ENCODE measurements at regions of chr9 and their contacts with region 1.

Region 1: DNA sequence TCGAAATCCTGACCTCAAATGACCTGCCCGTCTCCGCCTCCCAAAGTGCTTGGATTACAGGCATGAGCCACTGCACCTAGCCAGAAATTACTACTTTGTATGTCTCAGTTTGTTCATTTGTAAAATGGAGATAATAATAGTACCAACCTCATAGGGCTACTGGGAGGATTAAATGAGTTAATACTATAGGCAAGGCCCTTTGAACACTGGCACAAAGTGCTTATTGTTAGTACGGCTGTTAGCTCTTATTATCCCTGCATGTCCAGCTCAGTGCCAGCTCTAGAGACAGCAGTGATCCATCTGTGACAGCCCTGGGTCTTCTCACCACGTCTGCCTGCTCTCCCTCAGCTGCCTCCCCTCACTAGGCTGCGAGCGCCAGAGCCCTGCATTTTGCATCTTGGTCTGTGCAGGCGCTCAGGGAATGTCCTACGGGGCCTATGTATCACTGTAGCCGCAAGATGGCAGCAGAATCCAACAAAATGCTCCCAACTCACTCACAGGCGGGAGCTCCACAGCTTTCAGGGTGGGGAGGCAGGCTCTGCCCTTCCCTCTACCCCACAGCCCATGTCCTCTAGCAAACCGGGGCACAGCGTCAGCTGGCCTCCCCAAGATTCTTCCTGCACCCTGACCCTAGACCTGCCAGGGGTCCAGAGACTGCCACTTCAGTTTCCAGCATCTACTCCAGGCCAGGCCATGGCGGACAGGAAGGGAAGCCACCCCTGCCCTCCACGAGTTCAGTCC is 17.7 kb upstream of the AKNA start:
- DNase-seq: peak; percentile 78 to 90
- ATAC-seq: peak; percentile 87 to 98
- H3K4me3 ChIP-seq: no peak overlapping the region
- H3K27ac ChIP-seq: no peak overlapping the region
- H3K4me1 ChIP-seq: no peaks in the 10 kb centered on the region
- CTCF ChIP-seq: peak; percentile 84
- EP300 ChIP-seq: no peak
- POLR2A ChIP-seq: no peak
- RAD21 ChIP-seq: peak; percentile 93 to 95

Region 2: GRCh38 chr9:114351932-114352331 is 53.5 kb before region 1 on chr9:
- CTCF ChIA-PET with region 1: no interaction called
- POLR2A ChIA-PET with region 1: no interaction called
- DNase-seq: no peak
- ATAC-seq: no peak
- H3K4me3 ChIP-seq: no peak overlapping the region
- H3K27ac ChIP-seq: peak overlapping the region in 1 of 2 experiments; percentile 85; a peak in 1 of 6 replicates
- H3K4me1 ChIP-seq: peaks cover 28% of the 10 kb centered on the region
- CTCF ChIP-seq: no peak
- EP300 ChIP-seq: no peak
- POLR2A ChIP-seq: no peak
- RAD21 ChIP-seq: no peak

Region 3: DNA sequence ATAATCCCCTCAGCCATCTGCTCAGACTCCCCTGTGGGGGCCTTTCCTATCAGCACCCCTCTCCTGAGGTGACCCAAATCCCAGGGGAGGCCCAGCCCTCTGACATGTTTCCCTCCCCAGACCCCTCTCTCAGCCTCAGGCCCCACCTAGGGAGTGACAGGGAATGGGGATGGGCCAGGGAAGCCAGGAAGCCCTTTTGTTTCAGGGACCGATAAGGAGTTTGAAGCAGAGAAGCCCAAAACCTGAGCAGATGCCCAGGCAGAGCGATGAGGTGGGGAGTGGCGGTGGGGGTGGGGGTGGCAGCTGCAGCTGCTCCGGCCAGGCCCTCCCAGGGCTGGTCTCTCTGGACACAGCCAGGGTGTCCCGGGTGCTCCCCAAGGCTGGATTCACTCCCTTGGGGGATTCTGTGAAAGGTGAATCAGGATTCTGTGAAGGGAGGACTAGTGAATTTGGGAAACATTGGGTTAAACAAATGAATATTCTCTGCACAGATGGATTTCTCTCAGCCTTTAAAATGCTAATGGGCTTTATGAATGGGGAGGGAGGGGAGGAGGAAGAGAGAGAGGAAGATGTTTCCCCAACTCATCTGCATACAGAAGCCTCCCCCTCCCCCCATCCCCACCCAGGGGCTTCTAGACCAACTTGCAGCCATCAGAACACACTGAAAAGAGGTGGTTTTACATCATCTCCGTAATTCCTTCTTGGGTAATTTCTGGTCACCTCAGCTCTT is 35.0 kb before region 1 on chr9:
- CTCF ChIA-PET with region 1: interaction called, 12 read pairs
- POLR2A ChIA-PET with region 1: no interaction called
- DNase-seq: no peak
- ATAC-seq: no peak
- H3K4me3 ChIP-seq: no peak overlapping the region
- H3K27ac ChIP-seq: no peak overlapping the region
- H3K4me1 ChIP-seq: peaks cover 17% of the 10 kb centered on the region
- CTCF ChIP-seq: no peak
- EP300 ChIP-seq: no peak
- POLR2A ChIP-seq: no peak
- RAD21 ChIP-seq: no peak

Region 4: DNA sequence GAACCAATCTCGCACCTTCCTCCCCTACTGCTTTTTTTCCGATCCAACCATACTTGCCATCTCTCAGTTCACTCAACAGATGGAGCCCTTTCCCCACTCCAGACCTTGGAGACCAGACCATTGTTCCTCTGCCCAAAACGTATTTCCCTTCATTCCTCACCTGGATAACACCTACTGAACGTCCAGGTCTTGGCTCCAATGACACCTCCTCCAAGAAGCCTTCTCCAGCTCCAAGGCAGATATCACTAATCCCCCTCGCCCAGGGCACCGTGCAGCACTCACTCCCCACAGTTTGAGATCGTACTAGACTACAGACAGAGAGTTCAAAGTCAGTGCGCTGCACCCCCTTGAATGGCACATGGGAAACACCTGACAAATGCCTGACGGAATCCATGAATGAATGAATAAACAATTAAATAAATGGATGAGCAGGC is 29.4 kb after region 1 on chr9:
- CTCF ChIA-PET with region 1: interaction called, 27 read pairs
- POLR2A ChIA-PET with region 1: no interaction called
- DNase-seq: peak; percentile 47 to 63
- ATAC-seq: peak; percentile 77 to 91; a peak in 5 of 6 replicates
- H3K4me3 ChIP-seq: no peak overlapping the region
- H3K27ac ChIP-seq: no peak overlapping the region
- H3K4me1 ChIP-seq: no peaks in the 10 kb centered on the region
- CTCF ChIP-seq: peak; percentile 66
- EP300 ChIP-seq: no peak
- POLR2A ChIP-seq: no peak
- RAD21 ChIP-seq: peak; percentile 78 to 87

Region 5: DNA sequence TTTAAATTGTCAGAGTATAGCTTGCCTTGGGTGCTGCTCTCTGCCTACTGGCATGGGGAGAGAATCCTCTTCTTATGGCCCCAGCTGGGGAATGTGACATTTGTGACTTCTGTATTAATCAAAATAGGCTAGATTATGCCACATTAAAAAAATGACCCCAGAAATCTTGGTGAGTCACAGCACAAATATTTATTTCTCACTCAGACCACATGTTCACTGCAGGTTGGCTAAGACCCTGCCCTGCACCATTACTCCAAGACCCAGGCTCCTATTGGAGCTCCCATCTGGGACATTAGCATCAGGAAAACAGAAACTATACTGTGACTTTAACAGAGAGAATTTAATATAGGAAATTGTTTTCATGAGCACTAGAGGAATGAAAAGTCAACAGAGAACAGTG is 116.4 kb after region 1 on chr9:
- CTCF ChIA-PET with region 1: no interaction called
- POLR2A ChIA-PET with region 1: no interaction called
- DNase-seq: no peak
- ATAC-seq: no peak
- H3K4me3 ChIP-seq: no peak overlapping the region
- H3K27ac ChIP-seq: no peak overlapping the region
- H3K4me1 ChIP-seq: peaks cover 16% of the 10 kb centered on the region
- CTCF ChIP-seq: no peak
- EP300 ChIP-seq: no peak
- POLR2A ChIP-seq: no peak
- RAD21 ChIP-seq: no peak

Region 6: DNA sequence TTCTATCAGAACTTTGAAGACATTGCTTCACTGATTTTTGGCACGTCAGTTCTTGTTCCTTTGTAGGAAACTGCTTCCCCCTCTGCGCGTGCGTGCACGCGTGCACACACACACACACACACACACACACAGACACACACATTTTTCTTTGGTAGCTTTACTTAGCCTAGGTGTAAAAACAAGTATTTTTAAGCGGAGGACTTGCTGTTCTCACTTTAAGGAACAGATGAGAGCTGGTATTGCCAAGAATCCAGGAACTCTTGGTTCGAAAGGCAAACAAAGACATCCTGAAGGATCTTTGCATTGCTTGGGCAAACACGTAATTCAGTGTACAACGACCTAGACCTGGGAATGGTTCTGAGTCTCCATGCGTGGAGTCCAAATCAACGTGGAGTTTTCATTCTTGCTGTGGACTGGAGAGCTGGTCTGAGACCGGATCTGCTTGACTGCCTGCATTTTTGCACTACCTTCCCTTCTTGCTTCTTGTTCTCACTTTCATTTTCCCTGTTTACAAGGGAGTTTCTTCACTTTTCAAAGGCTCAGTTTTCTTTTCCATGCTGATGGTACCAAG is 213.8 kb after region 1 on chr9:
- CTCF ChIA-PET with region 1: interaction called, 16 read pairs
- POLR2A ChIA-PET with region 1: no interaction called
- DNase-seq: no peak
- ATAC-seq: no peak
- H3K4me3 ChIP-seq: no peak overlapping the region
- H3K27ac ChIP-seq: no peak overlapping the region
- H3K4me1 ChIP-seq: peaks cover 21% of the 10 kb centered on the region
- CTCF ChIP-seq: no peak
- EP300 ChIP-seq: no peak
- POLR2A ChIP-seq: no peak
- RAD21 ChIP-seq: no peak

Region 7: GRCh38 chr9:114662081-114662989 is 256.9 kb after region 1 on chr9:
- CTCF ChIA-PET with region 1: interaction called, 11 read pairs
- POLR2A ChIA-PET with region 1: no interaction called
- DNase-seq: peak; percentile 33 to 92
- ATAC-seq: peak; percentile 86 to 97
- H3K4me3 ChIP-seq: no peak overlapping the region
- H3K27ac ChIP-seq: peak overlapping the region; percentile 10 to 40; a peak in 4 of 6 replicates
- H3K4me1 ChIP-seq: no peaks in the 10 kb centered on the region
- CTCF ChIP-seq: peak; percentile 88
- EP300 ChIP-seq: no peak
- POLR2A ChIP-seq: no peak
- RAD21 ChIP-seq: peak; percentile 94

Region 8: DNA sequence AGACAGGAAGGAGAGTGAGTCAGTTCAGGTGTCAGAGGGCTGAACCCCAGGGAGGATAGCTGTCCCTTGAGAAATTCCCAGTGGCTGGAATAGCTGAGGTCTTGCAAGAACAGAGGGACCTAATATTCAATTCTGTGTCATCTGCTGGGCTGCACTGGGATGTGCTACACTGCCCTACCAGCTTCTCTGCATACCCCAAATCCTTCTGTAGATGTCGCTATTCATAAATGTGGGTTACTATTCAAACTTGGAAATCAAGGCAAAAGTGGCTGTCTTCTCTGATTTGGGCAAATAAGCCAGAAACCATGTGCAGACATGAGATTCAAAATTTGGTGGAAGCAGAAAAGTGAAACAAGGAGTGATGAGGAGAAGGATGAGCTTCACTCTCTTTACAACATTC is 508.7 kb after region 1 on chr9:
- CTCF ChIA-PET with region 1: interaction called, 55 read pairs
- POLR2A ChIA-PET with region 1: no interaction called
- DNase-seq: no peak
- ATAC-seq: peak in 1 of 2 experiments; percentile 57; a peak in 2 of 6 replicates
- H3K4me3 ChIP-seq: no peak overlapping the region
- H3K27ac ChIP-seq: no peak overlapping the region
- H3K4me1 ChIP-seq: peaks cover 20% of the 10 kb centered on the region
- CTCF ChIP-seq: no peak
- EP300 ChIP-seq: no peak
- POLR2A ChIP-seq: no peak
- RAD21 ChIP-seq: no peak